H1 (cell line): ENCODE measurements at regions of chr3 and their contacts with region 1.

Region 1: GRCh38 chr3:31981206-31982181 is at the starts of genes OSBPL10 and ZNF860:
- DNase-seq: peak in 1 of 2 experiments; percentile 87
- H3K4me3 ChIP-seq: peak within 1 kb of the TSS; percentile 71 to 96 (median 88)
- H3K27ac ChIP-seq: peak within 1 kb of the TSS; percentile 81
- H3K4me1 ChIP-seq: peaks cover 0 to 7% (median 4%) of the 10 kb centered on the region in 4 experiments; a peak in 3 of 7 replicates
- H3K27me3 ChIP-seq: no peaks in the 10 kb centered on the region; a peak in 1 of 7 replicates
- CTCF ChIP-seq: no peak
- EP300 ChIP-seq: no peak
- POLR2A ChIP-seq: no peak; a peak in 2 of 3 replicates
- RAD21 ChIP-seq: peak in 1 of 2 experiments; percentile 19; a peak in 1 of 4 replicates
- total RNA-seq, gene OSBPL10: 86.7 and 88.8 TPM in 2 replicates
- total RNA-seq, gene ZNF860: 8.6 and 9.8 TPM in 2 replicates

Region 2: GRCh38 chr3:31960793-31961431 is 20.6 kb before region 1 on chr3:
- CTCF ChIA-PET with region 1: interaction called, 8 read pairs
- POLR2A ChIA-PET with region 1: interaction called, 13 read pairs
- DNase-seq: peak in 1 of 2 experiments; percentile 48
- H3K4me3 ChIP-seq: peak overlapping the region in 1 of 4 experiments; percentile 52; a peak in 5 of 8 replicates
- H3K27ac ChIP-seq: peak overlapping the region; percentile 40; the same call in 1 of the 2 replicates
- H3K4me1 ChIP-seq: peaks cover 2 to 29% (median 16%) of the 10 kb centered on the region in 4 experiments
- H3K27me3 ChIP-seq: no peaks in the 10 kb centered on the region
- CTCF ChIP-seq: no peak
- EP300 ChIP-seq: no peak
- POLR2A ChIP-seq: no peak
- RAD21 ChIP-seq: no peak

Region 3: GRCh38 chr3:31968927-31969418 is 12.5 kb before region 1 on chr3:
- CTCF ChIA-PET with region 1: interaction called, 5 read pairs
- POLR2A ChIA-PET with region 1: interaction called, 10 read pairs
- DNase-seq: no peak
- H3K4me3 ChIP-seq: no peak overlapping the region
- H3K27ac ChIP-seq: no peak overlapping the region
- H3K4me1 ChIP-seq: peaks cover 8 to 20% (median 14%) of the 10 kb centered on the region in 4 experiments
- H3K27me3 ChIP-seq: no peaks in the 10 kb centered on the region
- CTCF ChIP-seq: no peak
- EP300 ChIP-seq: no peak
- POLR2A ChIP-seq: no peak
- RAD21 ChIP-seq: no peak

Region 4: GRCh38 chr3:32026593-32026992 is 45.1 kb after region 1 on chr3:
- CTCF ChIA-PET with region 1: no interaction called
- POLR2A ChIA-PET with region 1: no interaction called
- DNase-seq: no peak
- H3K4me3 ChIP-seq: no peak overlapping the region
- H3K27ac ChIP-seq: no peak overlapping the region
- H3K4me1 ChIP-seq: no peaks in the 10 kb centered on the region
- H3K27me3 ChIP-seq: no peaks in the 10 kb centered on the region
- CTCF ChIP-seq: no peak
- EP300 ChIP-seq: no peak
- POLR2A ChIP-seq: no peak
- RAD21 ChIP-seq: no peak

Region 5: DNA sequence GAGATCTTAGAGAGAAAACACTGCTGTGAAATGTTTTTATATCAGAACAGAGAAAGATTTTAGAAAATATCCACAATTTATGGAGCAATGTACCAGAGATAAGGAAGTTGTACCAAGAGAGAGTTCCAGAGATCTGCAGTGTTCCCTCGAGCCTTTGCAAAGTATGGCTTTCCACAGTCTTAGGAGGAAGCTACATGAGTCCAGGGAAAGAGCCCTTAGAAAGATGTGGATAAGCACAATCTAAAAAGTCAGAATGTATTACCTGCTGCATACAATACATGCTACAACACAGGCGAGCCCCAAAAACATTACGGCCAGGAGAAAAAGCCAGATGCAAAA is 56.4 kb after region 1 on chr3:
- CTCF ChIA-PET with region 1: no interaction called
- POLR2A ChIA-PET with region 1: no interaction called
- DNase-seq: no peak
- H3K4me3 ChIP-seq: no peak overlapping the region
- H3K27ac ChIP-seq: no peak overlapping the region
- H3K4me1 ChIP-seq: no peaks in the 10 kb centered on the region
- H3K27me3 ChIP-seq: no peaks in the 10 kb centered on the region
- CTCF ChIP-seq: no peak
- EP300 ChIP-seq: no peak
- POLR2A ChIP-seq: no peak
- RAD21 ChIP-seq: no peak

Region 6: DNA sequence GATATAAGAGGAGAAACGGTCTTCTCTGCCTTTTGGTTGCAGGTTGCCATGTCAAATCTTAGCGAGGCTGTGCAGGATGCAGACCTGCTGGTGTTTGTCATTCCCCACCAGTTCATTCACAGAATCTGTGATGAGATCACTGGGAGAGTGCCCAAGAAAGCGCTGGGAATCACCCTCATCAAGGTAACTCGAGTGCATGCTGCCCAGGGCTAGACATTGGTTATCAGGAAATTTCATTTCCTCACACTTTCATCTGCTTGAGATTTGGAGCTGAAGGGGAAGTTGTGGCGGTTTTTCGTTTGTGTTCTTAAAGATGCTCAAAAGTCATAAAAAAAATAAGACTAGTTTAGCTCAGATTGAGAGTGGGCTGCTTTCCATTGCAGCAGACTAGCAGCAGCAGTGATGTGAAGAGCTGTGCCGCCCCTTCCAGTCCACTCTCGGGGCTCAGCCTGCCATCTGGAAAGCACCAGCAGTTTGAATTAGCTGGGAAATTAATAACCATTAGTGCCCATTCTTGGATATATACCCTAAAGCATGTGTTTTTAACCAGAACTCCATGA is 157.1 kb after region 1 on chr3:
- CTCF ChIA-PET with region 1: no interaction called
- POLR2A ChIA-PET with region 1: no interaction called
- DNase-seq: no peak
- H3K4me3 ChIP-seq: no peak overlapping the region
- H3K27ac ChIP-seq: no peak overlapping the region
- H3K4me1 ChIP-seq: no peaks in the 10 kb centered on the region
- H3K27me3 ChIP-seq: no peaks in the 10 kb centered on the region
- CTCF ChIP-seq: no peak
- EP300 ChIP-seq: no peak
- POLR2A ChIP-seq: no peak
- RAD21 ChIP-seq: no peak